Naive thymus-derived CD4-positive, alpha-beta T cell (primary cell): ENCODE measurements at regions of chr3 and their contacts with region 1.

Region 1: GRCh38 chr3:193572426-193572908 is 17.8 kb upstream of the ATP13A4 start:
- DNase-seq: peak in 8 of 9 donors; percentile 7 to 49 (median 43)
- ATAC-seq: peak; percentile 79
- H3K4me3 ChIP-seq: no peak overlapping the region
- H3K4me3 Mint-ChIP-seq: no peak overlapping the region
- H3K27ac ChIP-seq: no peak overlapping the region
- H3K27ac Mint-ChIP-seq: no peak overlapping the region
- H3K4me1 ChIP-seq: no peaks in the 10 kb centered on the region
- H3K4me1 Mint-ChIP-seq: peaks cover 0 to 5% (median 0%) of the 10 kb centered on the region in 7 donors
- H3K27me3 ChIP-seq: no peaks in the 10 kb centered on the region
- H3K27me3 Mint-ChIP-seq: no peaks in the 10 kb centered on the region

Region 2: GRCh38 chr3:192352142-192352541 is 1220.3 kb before region 1 on chr3:
- CTCF ChIA-PET with region 1: no interaction called
- POLR2A ChIA-PET with region 1: no interaction called
- intact Hi-C with region 1: no loop called
- DNase-seq: no peak
- ATAC-seq: no peak
- H3K4me3 ChIP-seq: no peak overlapping the region
- H3K4me3 Mint-ChIP-seq: no peak overlapping the region
- H3K27ac ChIP-seq: no peak overlapping the region
- H3K27ac Mint-ChIP-seq: no peak overlapping the region
- H3K4me1 ChIP-seq: no peaks in the 10 kb centered on the region
- H3K4me1 Mint-ChIP-seq: no peaks in the 10 kb centered on the region
- H3K27me3 ChIP-seq: peaks cover 0 to 3% of the 10 kb centered on the region in 2 donors
- H3K27me3 Mint-ChIP-seq: peaks cover 0 to 4% (median 0%) of the 10 kb centered on the region in 5 donors

Region 3: DNA sequence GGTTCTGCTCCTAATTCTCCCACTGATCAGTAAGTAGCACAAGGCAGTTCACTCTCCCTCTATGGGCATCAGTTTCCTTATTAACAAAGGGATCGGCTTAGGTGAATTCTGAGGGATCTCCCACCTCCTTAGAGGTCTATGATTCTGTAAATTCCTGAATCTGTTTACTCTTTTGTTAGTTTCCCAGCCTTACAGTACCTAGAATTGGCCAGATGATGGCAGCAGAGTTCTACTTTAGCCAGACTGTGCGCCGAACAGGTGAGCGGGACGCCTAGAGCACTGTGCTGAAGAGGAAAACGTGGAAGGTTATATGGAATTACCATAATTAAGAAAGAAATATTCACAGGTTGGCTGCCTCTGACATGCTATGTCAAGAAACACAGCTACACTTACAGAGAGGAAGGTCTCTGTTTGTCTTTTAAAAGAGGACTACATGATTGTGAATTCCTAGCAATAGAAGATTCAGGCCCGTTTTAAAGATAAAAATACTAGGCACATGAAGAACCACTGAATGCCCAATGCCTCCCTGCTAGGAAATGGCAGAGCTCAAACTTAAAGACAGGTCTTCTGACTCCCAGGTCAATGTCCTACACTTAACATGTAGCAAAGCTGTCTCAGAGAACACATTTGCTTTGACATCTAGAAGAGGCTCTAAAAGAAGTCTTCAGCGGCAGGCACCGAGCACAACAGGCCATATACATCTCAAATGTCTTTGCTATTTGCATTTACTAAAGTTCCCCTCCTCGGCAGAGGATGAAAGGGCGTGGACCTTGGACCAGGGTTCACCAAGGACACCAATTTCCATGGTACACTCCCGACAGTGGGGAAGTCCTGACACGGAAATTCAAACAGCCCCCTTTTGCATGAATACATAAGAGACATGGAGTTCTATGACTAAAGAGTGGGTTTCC is 1105.0 kb before region 1 on chr3:
- CTCF ChIA-PET with region 1: no interaction called
- POLR2A ChIA-PET with region 1: no interaction called
- intact Hi-C with region 1: loop called (anchors 1 kb)
- DNase-seq: peak; percentile 7 to 45 (median 31)
- ATAC-seq: peak; percentile 83
- H3K4me3 ChIP-seq: no peak overlapping the region
- H3K4me3 Mint-ChIP-seq: peak overlapping the region in 1 of 10 donors; percentile 18
- H3K27ac ChIP-seq: no peak overlapping the region
- H3K27ac Mint-ChIP-seq: no peak overlapping the region
- H3K4me1 ChIP-seq: no peaks in the 10 kb centered on the region
- H3K4me1 Mint-ChIP-seq: peaks cover 0 to 4% (median 0%) of the 10 kb centered on the region in 7 donors
- H3K27me3 ChIP-seq: no peaks in the 10 kb centered on the region
- H3K27me3 Mint-ChIP-seq: peaks cover 11 to 26% (median 19%) of the 10 kb centered on the region in 5 donors

Region 4: DNA sequence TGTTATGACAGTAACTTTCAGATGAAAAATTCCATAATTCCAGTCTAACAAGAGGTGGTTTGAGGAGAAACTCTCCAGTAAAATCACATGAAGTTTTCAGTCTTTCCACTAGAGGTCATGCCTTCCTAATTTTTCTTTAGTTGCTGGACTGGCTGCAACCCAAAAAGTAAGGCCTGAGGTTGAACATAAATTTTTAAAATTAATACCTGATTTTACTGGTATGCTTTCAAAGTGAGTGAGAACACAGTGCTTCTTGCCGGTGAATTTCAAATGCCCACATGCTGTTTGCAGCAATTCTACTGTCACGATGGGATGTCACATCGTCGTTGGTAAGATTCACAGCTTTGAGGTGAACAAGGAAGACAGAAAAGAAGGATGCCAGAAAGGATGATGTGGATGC is 756.1 kb before region 1 on chr3:
- CTCF ChIA-PET with region 1: interaction called, 8 read pairs
- POLR2A ChIA-PET with region 1: no interaction called
- intact Hi-C with region 1: loop called (anchors 1 kb)
- DNase-seq: peak in 5 of 9 donors; percentile 13 to 38 (median 24)
- ATAC-seq: no peak
- H3K4me3 ChIP-seq: no peak overlapping the region
- H3K4me3 Mint-ChIP-seq: no peak overlapping the region
- H3K27ac ChIP-seq: no peak overlapping the region
- H3K27ac Mint-ChIP-seq: peak overlapping the region in 1 of 9 donors; percentile 9
- H3K4me1 ChIP-seq: no peaks in the 10 kb centered on the region
- H3K4me1 Mint-ChIP-seq: peaks cover 0 to 67% (median 4%) of the 10 kb centered on the region in 7 donors
- H3K27me3 ChIP-seq: no peaks in the 10 kb centered on the region
- H3K27me3 Mint-ChIP-seq: peaks cover 0 to 2% (median 0%) of the 10 kb centered on the region in 5 donors

Region 5: GRCh38 chr3:193190146-193190786 is 382.2 kb before region 1 on chr3:
- CTCF ChIA-PET with region 1: no interaction called
- POLR2A ChIA-PET with region 1: no interaction called
- intact Hi-C with region 1: loop called in 1 of 2 experiments (anchors 10 kb)
- DNase-seq: no peak
- ATAC-seq: no peak
- H3K4me3 ChIP-seq: no peak overlapping the region
- H3K4me3 Mint-ChIP-seq: no peak overlapping the region
- H3K27ac ChIP-seq: no peak overlapping the region
- H3K27ac Mint-ChIP-seq: no peak overlapping the region
- H3K4me1 ChIP-seq: no peaks in the 10 kb centered on the region
- H3K4me1 Mint-ChIP-seq: no peaks in the 10 kb centered on the region
- H3K27me3 ChIP-seq: no peaks in the 10 kb centered on the region
- H3K27me3 Mint-ChIP-seq: peaks cover 0 to 12% (median 0%) of the 10 kb centered on the region in 5 donors

Region 6: DNA sequence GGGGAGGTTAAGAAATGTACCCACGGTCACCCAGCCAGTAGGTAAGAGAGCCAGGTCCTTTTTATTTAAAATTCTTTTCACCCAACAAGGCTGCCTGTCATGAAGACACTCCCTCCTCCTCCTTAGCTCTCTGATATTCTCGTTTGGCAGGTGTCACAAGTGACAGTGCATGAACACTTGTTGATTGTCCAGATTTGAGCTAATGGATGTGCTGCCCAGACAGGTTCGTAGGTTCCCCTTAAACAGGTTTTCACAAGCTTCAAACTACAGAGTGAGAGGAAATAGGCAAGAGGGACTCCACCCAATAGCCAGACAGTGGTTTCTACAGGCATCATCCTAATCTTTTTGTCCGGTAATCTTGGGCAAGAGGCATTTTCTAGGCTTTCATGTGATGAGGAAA is 50.0 kb before region 1 on chr3:
- CTCF ChIA-PET with region 1: no interaction called
- POLR2A ChIA-PET with region 1: no interaction called
- intact Hi-C with region 1: no loop called
- DNase-seq: no peak
- ATAC-seq: no peak
- H3K4me3 ChIP-seq: no peak overlapping the region
- H3K4me3 Mint-ChIP-seq: no peak overlapping the region
- H3K27ac ChIP-seq: no peak overlapping the region
- H3K27ac Mint-ChIP-seq: no peak overlapping the region
- H3K4me1 ChIP-seq: no peaks in the 10 kb centered on the region
- H3K4me1 Mint-ChIP-seq: no peaks in the 10 kb centered on the region
- H3K27me3 ChIP-seq: no peaks in the 10 kb centered on the region
- H3K27me3 Mint-ChIP-seq: peaks cover 0 to 12% (median 2%) of the 10 kb centered on the region in 5 donors

Region 7: GRCh38 chr3:193716150-193716549 is 143.7 kb after region 1 on chr3:
- CTCF ChIA-PET with region 1: no interaction called
- POLR2A ChIA-PET with region 1: no interaction called
- intact Hi-C with region 1: no loop called
- DNase-seq: no peak
- ATAC-seq: no peak
- H3K4me3 ChIP-seq: no peak overlapping the region
- H3K4me3 Mint-ChIP-seq: peak overlapping the region in 1 of 10 donors; percentile 10
- H3K27ac ChIP-seq: no peak overlapping the region
- H3K27ac Mint-ChIP-seq: no peak overlapping the region
- H3K4me1 ChIP-seq: peaks cover 0 to 4% of the 10 kb centered on the region in 2 donors
- H3K4me1 Mint-ChIP-seq: peaks cover 0 to 13% (median 8%) of the 10 kb centered on the region in 7 donors
- H3K27me3 ChIP-seq: no peaks in the 10 kb centered on the region
- H3K27me3 Mint-ChIP-seq: peaks cover 0 to 5% (median 0%) of the 10 kb centered on the region in 5 donors